Activated naive CD4-positive, alpha-beta T cell treated with anti-CD3 and anti-CD28 coated beads for 36 hours (primary cell): ENCODE measurements at regions of chr6 and their contacts with region 1.

Region 1: DNA sequence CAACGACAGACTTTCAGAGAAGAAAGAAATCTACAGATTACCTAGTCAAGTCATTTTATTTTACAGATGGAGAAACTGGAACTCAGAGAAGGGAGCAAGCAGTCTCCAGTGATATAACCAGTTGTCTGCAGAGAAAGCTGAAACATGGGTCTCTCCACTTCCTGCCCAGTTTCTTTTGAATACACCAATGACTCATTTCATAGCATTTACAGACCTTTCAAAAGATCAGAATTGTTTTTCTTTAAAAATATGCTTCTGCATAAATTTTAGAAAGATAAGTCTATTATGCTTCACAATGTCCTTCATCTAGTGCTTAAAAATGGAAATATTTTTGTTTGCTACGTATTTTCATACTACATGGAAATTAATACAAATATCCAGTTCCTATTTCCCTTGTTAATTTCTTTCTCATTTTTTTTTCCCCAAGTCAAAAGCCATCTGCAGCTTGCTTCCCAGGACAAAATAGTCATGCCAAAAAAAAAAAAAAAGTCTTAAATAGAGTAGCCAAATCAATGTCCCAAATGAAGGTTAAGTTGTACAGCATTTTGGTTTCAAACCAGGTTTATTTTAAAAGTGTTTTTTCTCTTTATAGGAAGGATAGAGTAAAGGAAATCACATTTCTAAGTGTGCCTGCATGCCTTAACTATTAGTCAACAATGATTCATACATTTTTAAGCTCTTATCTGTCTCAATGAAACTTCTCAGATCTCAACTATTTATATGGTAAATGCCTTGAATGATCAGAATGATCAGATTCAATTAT is 36.9 kb downstream of the ARHGAP18 start:
- DNase-seq: peak; percentile 27
- H3K4me3 Mint-ChIP-seq: peak overlapping the region; percentile 63
- H3K27ac Mint-ChIP-seq: peak overlapping the region; percentile 71
- H3K4me1 Mint-ChIP-seq: peaks cover 32% of the 10 kb centered on the region
- H3K27me3 Mint-ChIP-seq: no peaks in the 10 kb centered on the region

Region 2: DNA sequence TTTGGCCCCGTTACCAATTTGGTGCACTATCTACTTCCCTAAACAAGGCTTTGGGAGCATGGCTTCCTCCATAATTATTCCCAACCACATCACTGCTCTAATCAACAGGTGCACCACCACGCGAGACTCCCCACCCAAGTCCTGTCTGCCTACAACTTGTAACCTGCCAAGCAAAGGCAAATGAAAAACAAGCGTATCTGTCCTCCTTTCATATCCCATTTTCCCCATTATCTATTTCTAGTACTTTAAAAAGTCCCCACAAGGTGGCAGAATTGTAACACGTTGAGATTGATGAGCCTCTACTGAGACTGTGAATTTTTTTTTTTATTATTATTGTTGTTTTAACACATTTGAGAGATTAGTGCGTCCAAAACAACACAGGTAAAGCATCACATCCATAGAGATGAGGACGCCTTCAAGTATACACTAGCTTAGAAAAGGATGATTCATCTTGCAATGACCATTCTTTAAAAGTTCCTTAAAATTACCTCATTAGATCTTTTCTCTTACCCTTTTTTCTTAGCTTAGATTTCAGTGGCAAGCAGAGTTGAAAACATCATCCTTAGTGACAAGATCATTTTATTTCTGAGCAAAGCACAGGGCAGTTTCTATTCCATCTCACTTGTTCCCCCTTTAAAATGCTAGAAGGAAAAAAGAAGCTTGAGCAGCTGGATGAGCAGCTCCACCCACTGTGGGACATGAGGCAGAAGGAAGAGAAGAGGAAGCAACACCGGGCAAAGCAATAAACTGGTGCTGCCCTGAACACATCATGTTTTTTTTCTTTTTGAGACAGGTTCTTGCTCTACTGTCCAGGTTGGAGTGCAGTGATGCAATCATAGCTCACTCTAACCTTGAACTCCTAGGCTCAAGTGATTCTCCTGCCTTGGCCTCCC is 173.9 kb before region 1 on chr6:
- CTCF ChIA-PET with region 1: no interaction called
- intact Hi-C with region 1: loop called (anchors 1 kb)
- DNase-seq: no peak
- H3K4me3 Mint-ChIP-seq: peak overlapping the region; percentile 64
- H3K27ac Mint-ChIP-seq: peak overlapping the region; percentile 91
- H3K4me1 Mint-ChIP-seq: peaks cover 72% of the 10 kb centered on the region
- H3K27me3 Mint-ChIP-seq: no peaks in the 10 kb centered on the region

Region 3: DNA sequence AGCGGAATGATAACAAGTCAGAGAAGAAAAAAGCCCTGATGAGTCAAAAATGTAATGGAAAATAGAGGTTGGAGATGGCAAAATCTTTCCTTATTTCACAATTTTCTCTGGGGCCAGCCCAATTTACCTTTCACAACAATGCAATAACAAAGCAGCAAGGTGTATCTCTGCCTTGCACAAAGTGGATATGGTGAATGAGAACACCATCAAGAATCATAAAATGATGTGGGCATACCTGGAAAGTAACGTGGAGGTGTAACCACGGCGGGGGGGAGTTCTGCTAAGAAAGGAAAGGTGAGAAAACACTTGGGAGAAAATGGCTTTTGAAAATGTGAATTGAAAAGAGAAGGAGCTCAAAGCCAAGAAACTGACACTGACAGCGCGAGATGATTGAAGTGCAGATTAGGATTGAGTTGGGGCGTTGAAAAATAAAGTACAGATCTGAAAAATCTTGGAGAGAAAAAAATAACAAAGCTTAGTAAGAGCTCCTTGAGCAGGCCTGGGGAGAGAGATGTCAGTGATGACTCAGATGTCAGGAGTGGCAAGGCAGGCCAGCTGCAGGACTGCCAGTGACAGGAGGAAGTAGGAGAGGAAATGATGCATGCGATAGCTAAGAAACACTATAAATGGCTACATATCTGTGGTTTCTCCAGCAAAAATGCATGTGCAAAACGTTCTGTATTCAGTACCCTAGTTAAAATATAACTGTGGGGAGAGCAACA is 10.7 kb after region 1 on chr6:
- CTCF ChIA-PET with region 1: interaction called, 12 read pairs
- intact Hi-C with region 1: loop called (anchors 1 kb)
- DNase-seq: peak; percentile 79
- H3K4me3 Mint-ChIP-seq: peak overlapping the region; percentile 2
- H3K27ac Mint-ChIP-seq: peak overlapping the region; percentile 68
- H3K4me1 Mint-ChIP-seq: peaks cover 45% of the 10 kb centered on the region
- H3K27me3 Mint-ChIP-seq: no peaks in the 10 kb centered on the region

Region 4: GRCh38 chr6:129730477-129731165 is 57.6 kb after region 1 on chr6:
- CTCF ChIA-PET with region 1: interaction called, 8 read pairs
- intact Hi-C with region 1: loop called (anchors 1 kb)
- DNase-seq: peak; percentile 47
- H3K4me3 Mint-ChIP-seq: no peak overlapping the region
- H3K27ac Mint-ChIP-seq: no peak overlapping the region
- H3K4me1 Mint-ChIP-seq: peaks cover 10% of the 10 kb centered on the region
- H3K27me3 Mint-ChIP-seq: no peaks in the 10 kb centered on the region

Region 5: GRCh38 chr6:130020907-130021629 is 348.0 kb after region 1 on chr6:
- CTCF ChIA-PET with region 1: no interaction called
- intact Hi-C with region 1: loop called (anchors 2 kb)
- DNase-seq: peak; percentile 90
- H3K4me3 Mint-ChIP-seq: peak overlapping the region; percentile 92
- H3K27ac Mint-ChIP-seq: peak overlapping the region; percentile 84
- H3K4me1 Mint-ChIP-seq: peaks cover 29% of the 10 kb centered on the region
- H3K27me3 Mint-ChIP-seq: no peaks in the 10 kb centered on the region

Region 6: GRCh38 chr6:130602151-130602770 is 929.2 kb after region 1 on chr6:
- CTCF ChIA-PET with region 1: no interaction called
- intact Hi-C with region 1: loop called (anchors 1 kb)
- DNase-seq: peak; percentile 50
- H3K4me3 Mint-ChIP-seq: no peak overlapping the region
- H3K27ac Mint-ChIP-seq: peak overlapping the region; percentile 28
- H3K4me1 Mint-ChIP-seq: peaks cover 21% of the 10 kb centered on the region
- H3K27me3 Mint-ChIP-seq: no peaks in the 10 kb centered on the region